WTC11 (cell line): ENCODE measurements at regions of chr3 and their contacts with region 1.

Region 1: DNA sequence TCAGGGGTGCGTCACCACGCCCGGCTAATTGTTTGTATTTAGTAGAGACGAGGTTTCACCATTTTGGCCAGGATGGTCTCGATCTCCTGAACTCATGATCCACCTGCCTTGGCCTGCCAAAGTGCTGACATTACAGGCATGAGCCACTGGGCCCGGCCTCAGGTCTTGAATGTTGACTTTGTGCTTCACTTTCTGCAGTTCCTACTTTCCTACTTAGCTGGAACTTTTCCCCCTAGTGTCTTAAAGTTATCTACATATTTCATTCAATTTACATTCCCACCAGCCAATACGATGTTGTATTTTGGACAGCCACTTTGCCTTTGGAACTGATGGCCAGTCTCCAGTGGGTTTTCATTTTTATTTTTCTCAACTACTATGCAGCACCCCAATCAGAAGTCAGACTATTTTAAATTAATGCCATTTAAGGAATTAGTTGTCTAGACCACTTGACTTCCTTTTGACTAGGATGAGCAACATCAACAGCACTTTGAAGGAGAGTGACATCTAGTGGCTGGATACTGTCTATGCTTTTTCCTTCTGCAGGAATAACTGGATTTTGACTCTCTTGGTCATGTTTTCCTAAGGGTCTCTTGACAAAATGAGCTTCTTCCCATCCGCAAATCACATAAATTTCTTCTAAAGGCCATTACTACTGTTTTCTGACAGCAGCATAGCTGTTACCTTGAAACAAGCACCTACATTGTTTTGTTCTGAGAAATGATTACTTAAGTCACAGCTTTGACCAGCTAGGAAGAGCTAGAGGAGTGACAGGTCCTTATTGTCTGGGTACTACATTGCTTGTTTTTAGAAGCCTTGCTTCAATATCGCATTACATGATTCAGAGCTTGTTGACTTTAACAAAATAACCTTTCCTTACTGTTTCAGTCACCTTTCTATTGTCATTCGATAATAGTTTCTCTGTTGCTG is 140.2 kb downstream of the ITPR1 start:
- DNase-seq: no peak
- ATAC-seq: peak; percentile 86
- H3K4me3 Mint-ChIP-seq: no peak overlapping the region
- H3K27ac Mint-ChIP-seq: peak overlapping the region; percentile 46; the same call in 1 of the 2 replicates
- H3K4me1 Mint-ChIP-seq: peaks cover 3% of the 10 kb centered on the region
- H3K27me3 Mint-ChIP-seq: no peaks in the 10 kb centered on the region
- CTCF ChIP-seq: peak; percentile 60

Region 2: GRCh38 chr3:4334548-4334947 is 298.8 kb before region 1 on chr3:
- CTCF ChIA-PET with region 1: interaction called, 11 read pairs
- POLR2A ChIA-PET with region 1: no interaction called
- DNase-seq: no peak
- ATAC-seq: peak; percentile 58
- H3K4me3 Mint-ChIP-seq: no peak overlapping the region
- H3K27ac Mint-ChIP-seq: peak overlapping the region; percentile 86; the same call in 1 of the 2 replicates
- H3K4me1 Mint-ChIP-seq: peaks cover 48% of the 10 kb centered on the region
- H3K27me3 Mint-ChIP-seq: no peaks in the 10 kb centered on the region; the same call in 1 of the 2 replicates
- CTCF ChIP-seq: no peak

Region 3: DNA sequence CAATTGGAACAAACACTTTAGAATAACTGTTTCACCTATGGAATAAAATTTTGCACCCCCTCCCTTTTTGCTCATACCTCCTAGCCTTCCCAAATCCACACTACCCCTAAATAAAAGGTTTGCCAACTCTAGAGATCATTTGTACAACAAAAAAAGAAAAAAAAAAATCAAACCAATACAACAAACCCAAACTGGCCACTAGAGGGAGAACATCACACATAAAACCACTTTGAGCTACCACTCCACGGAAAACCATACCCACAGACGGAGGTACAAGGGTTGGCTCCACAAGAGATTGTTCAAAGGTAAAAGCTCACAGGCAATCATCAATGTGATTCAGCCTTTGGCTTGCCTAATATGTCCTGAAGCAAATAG is 282.6 kb before region 1 on chr3:
- CTCF ChIA-PET with region 1: interaction called, 36 read pairs
- POLR2A ChIA-PET with region 1: no interaction called
- DNase-seq: no peak
- ATAC-seq: 0 out of 2 replicates have a peak, but pooled peaks have one; percentile 26
- H3K4me3 Mint-ChIP-seq: no peak overlapping the region
- H3K27ac Mint-ChIP-seq: no peak overlapping the region
- H3K4me1 Mint-ChIP-seq: no peaks in the 10 kb centered on the region
- H3K27me3 Mint-ChIP-seq: no peaks in the 10 kb centered on the region
- CTCF ChIP-seq: peak; percentile 76

Region 4: GRCh38 chr3:4493014-4493940 is 140.1 kb before region 1 on chr3 and contains the start of gene ITPR1:
- CTCF ChIA-PET with region 1: interaction called, 25 read pairs
- POLR2A ChIA-PET with region 1: no interaction called
- DNase-seq: peak; percentile 99
- ATAC-seq: peak; percentile 90
- H3K4me3 Mint-ChIP-seq: peak within 1 kb of the TSS; percentile 84
- H3K27ac Mint-ChIP-seq: peak within 1 kb of the TSS; percentile 96
- H3K4me1 Mint-ChIP-seq: peaks cover 20% of the 10 kb centered on the region
- H3K27me3 Mint-ChIP-seq: peaks cover 30% of the 10 kb centered on the region
- CTCF ChIP-seq: no peak
- total RNA-seq, gene ITPR1: 10.3 to 11.8 TPM (median 11.6 TPM) in 3 replicates

Region 5: DNA sequence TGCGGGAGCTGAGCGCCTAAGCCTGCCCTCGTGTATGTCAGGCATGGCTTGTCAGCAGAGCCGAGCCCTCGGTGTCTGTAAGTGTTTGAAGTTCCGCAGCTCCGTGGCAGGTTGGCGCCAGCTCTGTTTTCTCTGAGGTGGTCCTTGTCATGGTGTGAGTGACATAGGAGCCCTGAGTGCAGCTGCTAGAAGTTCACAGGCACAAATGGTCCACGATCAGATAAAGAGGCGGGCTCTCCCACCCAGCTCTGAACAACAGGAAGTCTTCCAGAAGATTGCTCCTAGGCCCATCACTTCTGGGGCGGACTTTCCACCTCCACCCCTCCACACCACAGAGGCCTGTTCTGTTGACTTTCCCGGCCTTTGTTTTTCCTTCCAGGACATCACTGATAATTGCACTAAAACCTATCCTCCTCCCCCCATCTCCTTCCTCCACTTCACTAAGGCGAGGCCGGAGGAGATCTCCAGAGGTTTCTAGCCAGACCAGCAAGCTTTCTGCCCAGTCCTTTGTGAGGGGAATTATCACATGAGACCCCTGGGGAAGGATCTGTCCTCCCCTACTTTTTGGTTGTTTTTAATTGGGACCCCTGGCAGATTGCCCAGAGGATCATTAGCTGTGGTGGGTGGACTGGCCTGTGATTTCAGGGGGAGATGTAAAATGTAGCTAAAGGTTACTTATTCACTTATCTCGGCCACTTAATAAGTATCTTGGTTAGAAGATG is 120.3 kb before region 1 on chr3:
- CTCF ChIA-PET with region 1: interaction called, 10 read pairs
- POLR2A ChIA-PET with region 1: no interaction called
- DNase-seq: no peak
- ATAC-seq: no peak; the same call in 1 of the 2 replicates
- H3K4me3 Mint-ChIP-seq: no peak overlapping the region
- H3K27ac Mint-ChIP-seq: no peak overlapping the region
- H3K4me1 Mint-ChIP-seq: peaks cover 38% of the 10 kb centered on the region
- H3K27me3 Mint-ChIP-seq: no peaks in the 10 kb centered on the region
- CTCF ChIP-seq: no peak

Region 6: DNA sequence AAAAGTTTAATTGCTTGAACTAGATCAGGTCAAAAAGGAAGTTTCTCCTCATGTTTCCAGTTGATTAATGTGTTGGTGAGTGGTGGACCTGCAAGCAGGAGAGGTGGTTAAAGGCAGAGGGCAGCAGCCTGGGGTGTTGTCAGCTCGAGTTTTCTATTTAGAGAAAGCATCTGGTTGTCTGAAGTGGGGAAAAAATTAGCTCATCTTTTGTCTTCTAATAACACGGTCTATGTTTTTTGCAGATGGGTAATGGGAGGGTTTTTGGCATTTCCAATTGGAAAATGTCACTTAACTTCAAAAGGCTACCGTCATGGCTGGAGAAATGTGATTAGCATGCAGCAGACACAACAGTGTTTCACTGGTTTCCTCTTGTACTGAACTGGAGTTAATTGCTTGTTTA is 17.6 kb before region 1 on chr3:
- CTCF ChIA-PET with region 1: interaction called, 12 read pairs
- POLR2A ChIA-PET with region 1: no interaction called
- DNase-seq: no peak
- ATAC-seq: no peak
- H3K4me3 Mint-ChIP-seq: no peak overlapping the region
- H3K27ac Mint-ChIP-seq: no peak overlapping the region
- H3K4me1 Mint-ChIP-seq: 0 out of 2 replicates have a peak, but pooled peaks cover 2% of the 10 kb centered on the region
- H3K27me3 Mint-ChIP-seq: no peaks in the 10 kb centered on the region
- CTCF ChIP-seq: no peak

Region 7: DNA sequence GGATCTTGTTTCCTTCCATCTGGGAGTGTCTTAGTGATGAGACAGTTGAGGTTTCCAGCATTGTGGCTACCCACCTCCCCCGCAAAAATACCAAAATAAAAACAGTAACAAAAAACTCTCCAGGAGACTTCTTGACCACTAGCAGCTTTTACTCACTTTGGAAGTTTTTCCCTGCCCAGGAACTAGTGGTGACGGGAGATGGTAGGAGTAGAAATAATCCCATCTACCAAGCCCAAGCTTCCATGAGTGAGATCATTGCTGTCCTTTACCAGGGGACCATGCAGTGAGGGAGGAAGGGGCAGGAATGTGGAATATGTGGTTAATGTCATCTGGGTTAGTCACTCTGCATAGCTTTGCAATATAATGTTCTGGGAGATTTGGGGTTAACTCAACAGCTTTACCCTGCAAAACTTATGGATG is 47.5 kb after region 1 on chr3:
- CTCF ChIA-PET with region 1: no interaction called
- POLR2A ChIA-PET with region 1: no interaction called
- DNase-seq: no peak
- ATAC-seq: peak; percentile 52
- H3K4me3 Mint-ChIP-seq: no peak overlapping the region
- H3K27ac Mint-ChIP-seq: no peak overlapping the region
- H3K4me1 Mint-ChIP-seq: peaks cover 13% of the 10 kb centered on the region
- H3K27me3 Mint-ChIP-seq: no peaks in the 10 kb centered on the region
- CTCF ChIP-seq: no peak